Posterior cingulate gyrus (tissue), 11 donors: ENCODE measurements at regions of chr3 and their contacts with region 1.

Region 1: DNA sequence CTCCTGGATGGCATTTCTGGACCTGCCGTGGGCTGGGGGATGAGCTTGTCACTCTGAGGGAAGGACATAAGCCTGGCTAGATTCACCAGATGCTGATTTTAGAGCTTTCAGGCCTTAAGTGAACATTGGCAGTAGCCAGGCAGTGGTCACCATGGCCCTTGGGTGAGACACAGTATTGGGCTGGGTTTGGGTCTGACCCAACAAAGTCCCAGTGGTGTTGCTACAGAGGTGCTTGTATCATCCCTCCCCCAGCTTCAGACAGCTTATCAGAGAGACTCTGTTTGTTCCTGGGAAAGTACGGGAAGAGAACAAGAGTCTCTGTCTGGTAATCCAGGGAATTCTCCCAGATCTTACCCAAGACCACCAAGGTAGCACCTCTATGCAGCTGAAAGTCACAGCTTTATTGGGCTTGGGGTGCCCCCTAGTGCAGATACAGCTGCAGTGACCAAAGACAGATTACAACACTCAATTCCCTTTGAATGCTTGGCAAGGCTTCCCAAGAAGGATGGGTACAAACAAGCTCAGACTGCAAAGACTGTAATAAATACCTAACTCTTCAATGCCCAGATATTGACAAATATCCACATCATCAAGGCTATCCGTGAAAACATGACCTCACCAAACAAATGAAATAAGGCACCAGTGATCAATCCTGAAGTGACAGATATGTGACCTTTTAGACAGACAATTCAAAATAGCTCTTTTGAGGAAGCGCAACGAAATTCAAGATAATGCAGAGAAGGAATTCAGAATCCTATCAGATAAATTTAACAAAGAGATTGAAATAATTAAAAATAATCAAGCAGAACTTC is 9.9 kb upstream of the RUVBL1 start:
- DNase-seq: peak in 1 of 10 donors; percentile 16

Region 2: DNA sequence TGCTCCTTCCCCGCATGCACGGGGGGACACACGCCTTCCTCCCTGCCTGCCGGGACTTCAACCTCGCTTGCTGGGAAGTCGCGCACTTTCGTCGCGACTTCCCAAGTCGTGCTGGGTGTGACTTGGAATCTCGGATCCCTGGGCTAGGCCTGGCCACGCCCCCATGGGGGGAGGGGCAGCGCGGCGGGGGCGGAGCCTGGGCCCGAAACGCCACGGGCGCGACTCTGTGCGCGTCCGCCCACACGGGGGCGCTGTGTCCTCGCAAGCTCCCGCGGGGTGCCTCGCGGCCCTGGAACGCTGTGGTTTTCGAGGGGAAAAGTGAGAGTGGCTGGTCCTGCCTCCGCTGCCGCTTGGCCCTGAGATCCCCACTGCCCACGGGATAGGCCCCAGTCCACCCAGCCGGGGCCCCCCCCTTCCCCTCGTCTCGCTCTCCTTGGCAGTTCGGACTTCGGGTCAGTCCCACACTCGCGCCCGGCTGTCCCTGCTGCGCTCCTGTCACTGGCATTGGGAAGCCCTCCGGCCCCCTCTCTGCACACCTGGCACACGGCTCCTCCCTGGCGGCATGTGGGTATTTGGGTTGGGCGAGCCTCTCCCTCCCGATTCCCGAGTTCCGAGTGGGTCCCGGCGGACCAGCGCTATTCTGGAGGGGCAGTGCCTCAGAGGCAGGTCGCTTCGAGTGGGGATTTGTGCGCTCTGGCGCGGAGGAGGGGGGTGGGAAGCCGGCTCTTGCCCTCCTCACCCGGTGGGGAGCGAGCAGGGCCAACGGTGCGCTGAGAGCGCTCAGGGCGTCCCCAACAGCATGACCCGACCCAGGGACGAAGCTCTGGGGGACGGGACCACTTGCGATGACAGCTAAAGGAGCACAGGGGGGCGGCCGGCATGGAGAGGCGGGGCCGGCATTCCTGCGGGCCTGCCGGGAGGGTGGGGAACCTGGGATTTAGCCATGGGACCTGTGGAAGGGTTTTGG is 57.7 kb before region 1 on chr3:
- intact Hi-C with region 1: loop called (anchors 5 kb)
- DNase-seq: peak; percentile 79 to 99 (median 92)